ENCODE measurements at regions of chr3 and their contacts with region 1.

Region 1: GRCh38 chr3:51941798-51942602 is at the starts of genes PARP3 and RRP9:
- DNase-seq: peak; percentile 99
- H3K4me3 ChIP-seq: peak within 1 kb of the TSS; percentile 81
- CTCF ChIP-seq: peak; percentile 99

Region 2: GRCh38 chr3:51961602-51962569 is 19.9 kb after region 1 on chr3:
- CTCF ChIA-PET with region 1: interaction called, 32 read pairs
- POLR2A ChIA-PET with region 1: interaction called, 10 read pairs
- DNase-seq: no peak
- H3K4me3 ChIP-seq: no peak overlapping the region
- CTCF ChIP-seq: no peak

Region 3: DNA sequence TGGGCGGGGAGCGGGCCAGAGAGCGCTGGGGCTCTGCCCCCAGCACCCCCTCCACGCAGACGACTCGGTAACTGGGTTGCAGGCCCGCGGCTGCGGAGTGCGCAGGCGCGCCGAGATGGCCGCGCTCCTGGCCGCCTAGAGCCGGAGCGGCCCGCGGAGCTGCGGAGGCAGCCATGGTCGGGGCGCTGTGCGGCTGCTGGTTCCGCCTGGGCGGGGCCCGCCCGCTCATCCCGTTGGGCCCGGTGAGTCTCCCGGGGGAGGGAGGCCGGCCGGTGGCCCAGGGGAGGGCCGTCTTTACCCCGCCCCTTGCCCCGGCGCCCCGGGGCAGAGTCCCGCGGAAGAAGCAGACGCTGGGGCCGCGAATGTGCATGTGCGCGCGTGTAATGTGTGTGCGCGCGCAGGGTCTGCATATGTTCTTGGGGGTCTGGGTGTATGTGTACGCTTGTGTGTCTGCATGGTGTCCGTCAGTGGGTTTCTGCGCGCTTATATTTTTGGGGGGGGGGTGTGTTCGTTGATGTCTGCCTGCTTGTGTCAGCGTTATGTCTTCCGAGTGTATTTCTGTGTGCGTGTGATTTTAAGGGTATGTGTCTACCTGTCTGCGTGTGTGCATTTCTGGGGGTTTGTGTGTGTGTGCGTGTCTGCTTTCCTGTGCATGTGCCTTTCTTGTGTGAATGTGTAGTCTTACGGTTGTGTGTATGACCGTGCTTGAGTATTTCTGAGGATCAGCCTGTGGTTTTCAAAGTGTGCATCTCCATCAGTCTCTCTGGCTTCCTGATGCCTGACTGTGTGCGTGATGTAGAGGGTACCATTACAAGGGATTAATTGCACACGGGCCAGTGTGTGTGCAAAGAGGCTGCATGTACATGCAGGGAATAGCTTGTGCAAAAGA is 33.2 kb after region 1 on chr3 and contains the start of gene ABHD14A:
- CTCF ChIA-PET with region 1: interaction called, 74 read pairs
- POLR2A ChIA-PET with region 1: interaction called, 8 read pairs
- DNase-seq: no peak
- H3K4me3 ChIP-seq: peak within 1 kb of the TSS; percentile 89
- CTCF ChIP-seq: no peak

Region 4: GRCh38 chr3:51995346-51996163 is 53.6 kb after region 1 on chr3 and contains the start of gene RPL29:
- CTCF ChIA-PET with region 1: interaction called, 14 read pairs
- POLR2A ChIA-PET with region 1: interaction called, 16 read pairs
- DNase-seq: peak; percentile 63
- H3K4me3 ChIP-seq: peak within 1 kb of the TSS; percentile 92
- CTCF ChIP-seq: no peak

Measured in AG04449 (cell line).